ENCODE measurements at regions of chr4 and their contacts with region 1.

Region 1: GRCh38 chr4:184263910-184264732 is 46.4 kb upstream of the ENPP6 start:
- DNase-seq: peak; percentile 97
- H3K4me3 Mint-ChIP-seq: no peak overlapping the region
- H3K27ac Mint-ChIP-seq: peak overlapping the region; percentile 11
- H3K4me1 Mint-ChIP-seq: peaks cover 52% of the 10 kb centered on the region
- H3K27me3 Mint-ChIP-seq: no peaks in the 10 kb centered on the region

Region 2: GRCh38 chr4:184287697-184288255 is 23.7 kb after region 1 on chr4:
- CTCF ChIA-PET with region 1: interaction called, 78 read pairs
- POLR2A ChIA-PET with region 1: interaction called, 65 read pairs
- intact Hi-C with region 1: loop called (anchors 1 kb)
- DNase-seq: no peak
- H3K4me3 Mint-ChIP-seq: no peak overlapping the region
- H3K27ac Mint-ChIP-seq: no peak overlapping the region
- H3K4me1 Mint-ChIP-seq: peaks cover 61% of the 10 kb centered on the region
- H3K27me3 Mint-ChIP-seq: peaks cover 4% of the 10 kb centered on the region

Region 3: GRCh38 chr4:184417802-184418511 is 153.8 kb after region 1 on chr4:
- CTCF ChIA-PET with region 1: interaction called, 17 read pairs
- POLR2A ChIA-PET with region 1: interaction called, 9 read pairs
- intact Hi-C with region 1: loop called (anchors 1 kb)
- DNase-seq: peak; percentile 23
- H3K4me3 Mint-ChIP-seq: peak overlapping the region; percentile 23
- H3K27ac Mint-ChIP-seq: peak overlapping the region; percentile 91
- H3K4me1 Mint-ChIP-seq: peaks cover 90% of the 10 kb centered on the region
- H3K27me3 Mint-ChIP-seq: no peaks in the 10 kb centered on the region

Region 4: GRCh38 chr4:184514121-184514988 is 250.2 kb after region 1 on chr4:
- CTCF ChIA-PET with region 1: interaction called, 26 read pairs
- POLR2A ChIA-PET with region 1: interaction called, 13 read pairs
- intact Hi-C with region 1: loop called (anchors 1 kb)
- DNase-seq: peak; percentile 90
- H3K4me3 Mint-ChIP-seq: peak overlapping the region; percentile 38
- H3K27ac Mint-ChIP-seq: peak overlapping the region; percentile 88
- H3K4me1 Mint-ChIP-seq: peaks cover 42% of the 10 kb centered on the region
- H3K27me3 Mint-ChIP-seq: no peaks in the 10 kb centered on the region

Region 5: GRCh38 chr4:184745831-184746795 is 482.0 kb after region 1 on chr4:
- CTCF ChIA-PET with region 1: interaction called, 12 read pairs
- POLR2A ChIA-PET with region 1: no interaction called
- intact Hi-C with region 1: no loop called
- DNase-seq: peak; percentile 80
- H3K4me3 Mint-ChIP-seq: no peak overlapping the region
- H3K27ac Mint-ChIP-seq: no peak overlapping the region
- H3K4me1 Mint-ChIP-seq: peaks cover 8% of the 10 kb centered on the region
- H3K27me3 Mint-ChIP-seq: no peaks in the 10 kb centered on the region

Region 6: GRCh38 chr4:185179488-185179887 is 915.4 kb after region 1 on chr4:
- CTCF ChIA-PET with region 1: no interaction called
- POLR2A ChIA-PET with region 1: no interaction called
- intact Hi-C with region 1: no loop called
- DNase-seq: peak; percentile 18
- H3K4me3 Mint-ChIP-seq: no peak overlapping the region
- H3K27ac Mint-ChIP-seq: no peak overlapping the region
- H3K4me1 Mint-ChIP-seq: peaks cover 31% of the 10 kb centered on the region
- H3K27me3 Mint-ChIP-seq: no peaks in the 10 kb centered on the region